ENCODE measurements at regions of chr10 and their contacts with region 1.

Region 1: GRCh38 chr10:97686962-97687784 is at the start of gene AVPI1:
- DNase-seq: peak; percentile 76
- ATAC-seq: peak; percentile 94
- H3K4me3 ChIP-seq: peak within 1 kb of the TSS; percentile 65
- H3K27ac ChIP-seq: 0 out of 2 replicates have a peak within 1 kb of the TSS, but pooled peaks have one; percentile 19
- H3K4me1 ChIP-seq: peaks cover 18% of the 10 kb centered on the region
- H3K27me3 ChIP-seq: no peaks in the 10 kb centered on the region; a peak in 1 of 4 replicates
- CTCF ChIP-seq: no peak
- EP300 ChIP-seq: peak in 1 of 2 experiments; percentile 48; a peak in 3 of 4 replicates
- POLR2A ChIP-seq: peak; percentile 76
- RAD21 ChIP-seq: no peak
- polyA plus RNA-seq, gene AVPI1: 0.08 to 0.13 TPM

Region 2: GRCh38 chr10:97553575-97554031 is 133.6 kb before region 1 on chr10:
- CTCF ChIA-PET with region 1: no interaction called
- POLR2A ChIA-PET with region 1: no interaction called
- RAD21 ChIA-PET with region 1: no interaction called
- SMC1A ChIA-PET with region 1: no interaction called
- in situ Hi-C with region 1: no loop called
- intact Hi-C with region 1: no loop called
- DNase-seq: peak; percentile 26
- ATAC-seq: peak; percentile 98
- H3K4me3 ChIP-seq: no peak overlapping the region
- H3K27ac ChIP-seq: no peak overlapping the region
- H3K4me1 ChIP-seq: peaks cover 18% of the 10 kb centered on the region
- H3K27me3 ChIP-seq: no peaks in the 10 kb centered on the region
- CTCF ChIP-seq: peak; percentile 80 to 94 (median 89)
- EP300 ChIP-seq: no peak
- POLR2A ChIP-seq: no peak
- RAD21 ChIP-seq: peak; percentile 78

Region 3: GRCh38 chr10:97572214-97572989 is 114.8 kb before region 1 on chr10 and contains the start of gene ANKRD2:
- CTCF ChIA-PET with region 1: interaction called, 10 read pairs
- POLR2A ChIA-PET with region 1: no interaction called
- RAD21 ChIA-PET with region 1: interaction called, 8 read pairs
- SMC1A ChIA-PET with region 1: no interaction called
- in situ Hi-C with region 1: no loop called
- intact Hi-C with region 1: no loop called
- DNase-seq: no peak
- ATAC-seq: peak; percentile 97
- H3K4me3 ChIP-seq: no peak within 1 kb of the TSS
- H3K27ac ChIP-seq: no peak within 1 kb of the TSS
- H3K4me1 ChIP-seq: no peaks in the 10 kb centered on the region
- H3K27me3 ChIP-seq: no peaks in the 10 kb centered on the region
- CTCF ChIP-seq: peak; percentile 89 to 95 (median 94)
- EP300 ChIP-seq: no peak
- POLR2A ChIP-seq: no peak
- RAD21 ChIP-seq: peak; percentile 73
- polyA plus RNA-seq, gene ANKRD2: not detected

Region 4: GRCh38 chr10:97676770-97677581 is 10.2 kb before region 1 on chr10:
- CTCF ChIA-PET with region 1: interaction called, 60 read pairs
- POLR2A ChIA-PET with region 1: interaction called, 3 read pairs
- RAD21 ChIA-PET with region 1: interaction called, 10 read pairs
- SMC1A ChIA-PET with region 1: interaction called, 19 read pairs
- in situ Hi-C with region 1: no loop called
- intact Hi-C with region 1: no loop called
- DNase-seq: no peak
- ATAC-seq: peak; percentile 95
- H3K4me3 ChIP-seq: no peak overlapping the region
- H3K27ac ChIP-seq: 0 out of 2 replicates have a peak overlapping the region, but pooled peaks have one; percentile 6
- H3K4me1 ChIP-seq: peaks cover 12% of the 10 kb centered on the region
- H3K27me3 ChIP-seq: no peaks in the 10 kb centered on the region
- CTCF ChIP-seq: peak; percentile 76 to 80 (median 78)
- EP300 ChIP-seq: no peak
- POLR2A ChIP-seq: peak; percentile 20; the same call in 1 of the 2 replicates
- RAD21 ChIP-seq: peak; percentile 81

Region 5: GRCh38 chr10:97714048-97714371 is 26.8 kb after region 1 on chr10:
- CTCF ChIA-PET with region 1: interaction called, 16 read pairs
- POLR2A ChIA-PET with region 1: interaction called, 6 read pairs
- RAD21 ChIA-PET with region 1: interaction called, 16 read pairs
- SMC1A ChIA-PET with region 1: interaction called, 11 read pairs
- in situ Hi-C with region 1: no loop called
- intact Hi-C with region 1: no loop called
- DNase-seq: no peak
- ATAC-seq: peak; percentile 87
- H3K4me3 ChIP-seq: peak overlapping the region; percentile 74
- H3K27ac ChIP-seq: no peak overlapping the region
- H3K4me1 ChIP-seq: peaks cover 3% of the 10 kb centered on the region; the same call in 1 of the 2 replicates
- H3K27me3 ChIP-seq: peaks cover 0 to 2% of the 10 kb centered on the region in 2 experiments; a peak in 1 of 4 replicates
- CTCF ChIP-seq: peak; percentile 13 to 42 (median 28); a peak in 3 of 6 replicates
- EP300 ChIP-seq: no peak
- POLR2A ChIP-seq: peak; percentile 87
- RAD21 ChIP-seq: no peak

Region 6: GRCh38 chr10:97731346-97732051 is 44.3 kb after region 1 on chr10:
- CTCF ChIA-PET with region 1: interaction called, 124 read pairs
- POLR2A ChIA-PET with region 1: interaction called, 5 read pairs
- RAD21 ChIA-PET with region 1: interaction called, 14 read pairs
- SMC1A ChIA-PET with region 1: interaction called, 21 read pairs
- in situ Hi-C with region 1: no loop called
- intact Hi-C with region 1: no loop called
- DNase-seq: no peak
- ATAC-seq: peak; percentile 78
- H3K4me3 ChIP-seq: no peak overlapping the region
- H3K27ac ChIP-seq: no peak overlapping the region
- H3K4me1 ChIP-seq: peaks cover 2% of the 10 kb centered on the region; the same call in 1 of the 2 replicates
- H3K27me3 ChIP-seq: no peaks in the 10 kb centered on the region
- CTCF ChIP-seq: peak; percentile 78 to 84 (median 80)
- EP300 ChIP-seq: no peak
- POLR2A ChIP-seq: no peak
- RAD21 ChIP-seq: peak; percentile 91

Region 7: GRCh38 chr10:97736902-97737769 is 50.0 kb after region 1 on chr10 and contains the start of gene ZFYVE27:
- CTCF ChIA-PET with region 1: interaction called, 124 read pairs
- POLR2A ChIA-PET with region 1: interaction called, 5 read pairs
- RAD21 ChIA-PET with region 1: interaction called, 14 read pairs
- SMC1A ChIA-PET with region 1: interaction called, 21 read pairs
- in situ Hi-C with region 1: no loop called
- intact Hi-C with region 1: no loop called
- DNase-seq: peak; percentile 85
- ATAC-seq: peak; percentile 90
- H3K4me3 ChIP-seq: peak within 1 kb of the TSS; percentile 91
- H3K27ac ChIP-seq: peak within 1 kb of the TSS; percentile 91
- H3K4me1 ChIP-seq: peaks cover 10% of the 10 kb centered on the region
- H3K27me3 ChIP-seq: no peaks in the 10 kb centered on the region
- CTCF ChIP-seq: no peak
- EP300 ChIP-seq: 0 out of 4 replicates have a peak, but pooled peaks of 1 of the 2 experiments have one; percentile 8
- POLR2A ChIP-seq: peak; percentile 98
- RAD21 ChIP-seq: no peak
- polyA plus RNA-seq, gene ZFYVE27: 1.1 to 1.3 TPM